ENCODE measurements at regions of chr6 and their contacts with region 1.

Region 1: DNA sequence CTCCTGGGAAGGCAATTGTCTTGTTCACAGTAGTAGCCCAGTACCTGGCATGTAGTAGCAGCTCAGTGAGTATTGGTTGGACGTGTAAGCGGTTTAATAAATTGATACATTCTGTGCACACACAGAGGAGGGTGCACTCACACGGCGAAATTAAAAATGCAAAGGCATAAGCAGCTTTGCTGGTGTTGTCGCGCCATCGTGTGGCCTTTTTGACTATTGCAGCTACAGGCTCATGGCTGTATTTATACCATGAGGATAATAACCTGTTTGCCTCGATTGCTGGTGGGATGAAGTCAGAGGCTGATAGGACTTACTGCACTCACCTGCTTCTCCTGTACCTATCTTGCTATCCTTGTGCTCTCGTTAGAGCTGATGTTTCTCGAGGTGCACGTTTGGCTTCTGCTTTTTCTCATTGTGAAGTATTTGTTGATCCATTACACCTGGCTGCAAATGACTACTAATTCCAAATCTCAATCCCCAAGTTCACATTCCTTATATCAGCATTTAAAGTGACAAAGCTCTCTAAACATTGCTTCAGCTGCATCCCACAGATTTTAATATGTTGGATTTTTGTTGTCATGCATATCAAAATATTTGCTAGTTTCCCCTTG is 61.5 kb downstream of the TBXT start:
- DNase-seq: peak in 1 of 2 experiments; percentile 31
- H3K4me3 ChIP-seq: no peak overlapping the region
- H3K27ac ChIP-seq: no peak overlapping the region
- H3K4me1 ChIP-seq: no peaks in the 10 kb centered on the region
- H3K27me3 ChIP-seq: peaks cover 10% of the 10 kb centered on the region; the same call in 1 of the 2 replicates
- CTCF ChIP-seq: peak; percentile 85

Region 2: GRCh38 chr6:165439928-165440554 is 666.1 kb before region 1 on chr6:
- CTCF ChIA-PET with region 1: no interaction called
- POLR2A ChIA-PET with region 1: no interaction called
- intact Hi-C with region 1: loop called (anchors 2 kb)
- DNase-seq: peak in 1 of 2 experiments; percentile 43
- H3K4me3 ChIP-seq: no peak overlapping the region
- H3K27ac ChIP-seq: no peak overlapping the region
- H3K4me1 ChIP-seq: 0 out of 2 replicates have a peak, but pooled peaks cover 4% of the 10 kb centered on the region
- H3K27me3 ChIP-seq: no peaks in the 10 kb centered on the region
- CTCF ChIP-seq: peak; percentile 74

Region 3: GRCh38 chr6:165884813-165885765 is 221.1 kb before region 1 on chr6:
- CTCF ChIA-PET with region 1: no interaction called
- POLR2A ChIA-PET with region 1: no interaction called
- intact Hi-C with region 1: loop called (anchors 1 kb)
- DNase-seq: peak in 1 of 2 experiments; percentile 26
- H3K4me3 ChIP-seq: no peak overlapping the region
- H3K27ac ChIP-seq: no peak overlapping the region
- H3K4me1 ChIP-seq: no peaks in the 10 kb centered on the region
- H3K27me3 ChIP-seq: peaks cover 19% of the 10 kb centered on the region
- CTCF ChIP-seq: peak; percentile 77

Region 4: DNA sequence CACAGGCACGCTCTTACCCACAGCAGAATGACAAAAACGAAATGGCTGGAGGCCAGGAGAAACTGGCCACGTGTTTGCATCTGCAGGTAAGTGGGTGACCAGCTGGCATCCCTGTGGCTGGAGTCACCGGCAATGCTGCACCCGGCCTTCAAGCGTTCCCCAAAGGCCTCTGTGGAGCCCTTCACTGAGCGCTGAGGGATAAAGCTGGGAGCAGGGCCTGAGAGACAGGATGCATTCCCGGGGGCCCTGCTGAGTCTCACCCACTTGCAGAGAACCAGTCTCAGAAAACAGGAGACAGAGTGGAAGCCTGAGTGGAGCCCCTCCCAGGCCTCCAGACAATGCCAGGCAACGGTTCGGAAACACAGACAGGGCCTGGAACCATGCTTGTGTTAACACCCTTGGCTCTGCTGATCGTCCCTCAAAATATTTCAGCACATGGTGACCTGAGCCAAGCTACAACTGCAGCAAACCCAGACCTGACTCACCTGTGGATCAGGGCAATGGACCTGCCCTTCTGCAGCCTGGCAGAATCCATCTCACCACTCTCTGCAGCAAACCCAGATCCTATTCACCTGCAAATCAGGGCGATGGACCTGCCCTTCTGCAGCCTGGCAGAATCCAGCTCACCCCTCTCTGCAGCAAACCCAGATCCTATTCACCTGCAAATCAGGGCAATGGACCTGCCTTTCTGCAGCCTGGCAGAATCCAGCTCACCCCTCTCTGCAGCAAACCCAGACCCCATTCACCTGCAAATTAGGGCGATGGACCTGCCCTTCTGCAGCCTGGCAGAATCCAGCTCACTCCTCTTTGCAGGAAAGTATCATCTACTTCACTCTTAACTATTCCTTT is 21.7 kb after region 1 on chr6:
- CTCF ChIA-PET with region 1: no interaction called
- POLR2A ChIA-PET with region 1: no interaction called
- intact Hi-C with region 1: no loop called
- DNase-seq: no peak
- H3K4me3 ChIP-seq: no peak overlapping the region
- H3K27ac ChIP-seq: no peak overlapping the region
- H3K4me1 ChIP-seq: no peaks in the 10 kb centered on the region
- H3K27me3 ChIP-seq: peaks cover 56% of the 10 kb centered on the region
- CTCF ChIP-seq: no peak

Region 5: GRCh38 chr6:166308033-166308768 is 202.0 kb after region 1 on chr6 and contains the start of gene PRR18:
- CTCF ChIA-PET with region 1: no interaction called
- POLR2A ChIA-PET with region 1: no interaction called
- intact Hi-C with region 1: no loop called
- DNase-seq: no peak
- H3K4me3 ChIP-seq: no peak within 1 kb of the TSS
- H3K27ac ChIP-seq: no peak within 1 kb of the TSS
- H3K4me1 ChIP-seq: no peaks in the 10 kb centered on the region
- H3K27me3 ChIP-seq: peaks cover 7% of the 10 kb centered on the region
- CTCF ChIP-seq: no peak
- total RNA-seq, gene PRR18: not detected in 2 replicates